Activated CD4-positive, alpha-beta T cell treated with anti-CD3 and anti-CD28 coated beads, Interleukin-2, amount 10 ng/mL, durations not matched to agents 7 days and 5 days (primary cell): ENCODE measurements at regions of chr1 and their contacts with region 1.

Region 1: GRCh38 chr1:228076796-228077430 is 5.6 kb upstream of the ARF1 start:
- DNase-seq: no peak
- H3K4me3 Mint-ChIP-seq: no peak overlapping the region
- H3K27ac Mint-ChIP-seq: no peak overlapping the region
- H3K4me1 Mint-ChIP-seq: peaks cover 15% of the 10 kb centered on the region
- H3K27me3 Mint-ChIP-seq: no peaks in the 10 kb centered on the region

Region 2: GRCh38 chr1:228059634-228060457 is 17.1 kb before region 1 on chr1:
- CTCF ChIA-PET with region 1: interaction called, 11 read pairs
- POLR2A ChIA-PET with region 1: no interaction called
- DNase-seq: peak; percentile 62
- H3K4me3 Mint-ChIP-seq: peak overlapping the region; percentile 50
- H3K27ac Mint-ChIP-seq: no peak overlapping the region
- H3K4me1 Mint-ChIP-seq: peaks cover 15% of the 10 kb centered on the region
- H3K27me3 Mint-ChIP-seq: peaks cover 57% of the 10 kb centered on the region

Region 3: GRCh38 chr1:228236744-228237143 is 159.8 kb after region 1 on chr1:
- CTCF ChIA-PET with region 1: no interaction called
- POLR2A ChIA-PET with region 1: no interaction called
- DNase-seq: no peak
- H3K4me3 Mint-ChIP-seq: no peak overlapping the region
- H3K27ac Mint-ChIP-seq: no peak overlapping the region
- H3K4me1 Mint-ChIP-seq: no peaks in the 10 kb centered on the region
- H3K27me3 Mint-ChIP-seq: no peaks in the 10 kb centered on the region